HepG2 (cell line): ENCODE measurements at regions of chr22 and their contacts with region 1.

Region 1: DNA sequence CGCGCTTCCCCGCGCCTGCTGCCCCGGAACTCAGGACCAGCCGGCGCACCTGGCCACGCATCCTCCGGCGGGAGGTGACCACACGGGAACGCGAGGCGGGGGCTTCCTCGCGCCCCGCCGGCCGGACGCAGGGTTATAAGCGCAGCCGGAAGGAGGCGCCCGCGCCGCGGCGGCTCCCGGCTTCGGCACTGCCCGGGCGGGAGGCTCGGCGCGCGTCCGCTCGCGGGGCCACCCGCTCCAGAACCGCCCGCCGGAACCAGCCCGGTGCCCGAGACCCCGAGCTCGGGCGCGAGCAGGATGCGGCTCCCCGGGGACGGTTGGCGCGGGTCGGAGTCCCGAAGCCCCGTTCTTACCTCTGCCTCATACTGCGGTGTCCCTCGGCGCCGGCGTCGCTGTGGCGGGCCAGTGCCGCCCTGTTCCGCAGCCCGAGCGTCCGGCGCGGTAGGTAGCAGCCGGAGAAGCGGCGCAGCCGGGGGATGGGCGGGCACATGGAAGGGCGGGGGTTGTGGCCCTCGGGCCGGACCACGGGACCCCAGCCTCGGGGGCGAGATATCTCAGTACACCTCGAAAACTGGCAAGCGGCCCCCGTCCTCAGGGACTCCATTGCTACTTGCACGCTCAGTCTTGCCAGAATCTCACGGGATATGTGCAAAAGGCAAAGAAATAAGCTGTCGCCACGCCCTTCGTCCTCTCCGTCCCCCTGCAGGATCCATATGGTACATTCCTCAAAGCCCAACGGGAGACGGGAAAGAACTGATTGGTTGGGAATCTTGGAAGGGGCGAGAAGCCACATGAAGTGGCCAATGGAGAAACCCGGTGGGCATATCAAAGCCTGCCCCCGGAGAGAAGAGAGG is 23.1 kb downstream of the MICAL3 start:
- DNase-seq: peak; percentile 97
- ATAC-seq: peak; percentile 94
- H3K4me3 ChIP-seq: peak overlapping the region; percentile 84 to 92 (median 86)
- H3K27ac ChIP-seq: peak overlapping the region; percentile 98
- H3K4me1 ChIP-seq: peaks cover 18% of the 10 kb centered on the region
- H3K27me3 ChIP-seq: no peaks in the 10 kb centered on the region
- CTCF ChIP-seq: peak; percentile 62
- EP300 ChIP-seq: no peak
- POLR2A ChIP-seq: peak; percentile 72 to 88
- RAD21 ChIP-seq: peak; percentile 94

Region 2: DNA sequence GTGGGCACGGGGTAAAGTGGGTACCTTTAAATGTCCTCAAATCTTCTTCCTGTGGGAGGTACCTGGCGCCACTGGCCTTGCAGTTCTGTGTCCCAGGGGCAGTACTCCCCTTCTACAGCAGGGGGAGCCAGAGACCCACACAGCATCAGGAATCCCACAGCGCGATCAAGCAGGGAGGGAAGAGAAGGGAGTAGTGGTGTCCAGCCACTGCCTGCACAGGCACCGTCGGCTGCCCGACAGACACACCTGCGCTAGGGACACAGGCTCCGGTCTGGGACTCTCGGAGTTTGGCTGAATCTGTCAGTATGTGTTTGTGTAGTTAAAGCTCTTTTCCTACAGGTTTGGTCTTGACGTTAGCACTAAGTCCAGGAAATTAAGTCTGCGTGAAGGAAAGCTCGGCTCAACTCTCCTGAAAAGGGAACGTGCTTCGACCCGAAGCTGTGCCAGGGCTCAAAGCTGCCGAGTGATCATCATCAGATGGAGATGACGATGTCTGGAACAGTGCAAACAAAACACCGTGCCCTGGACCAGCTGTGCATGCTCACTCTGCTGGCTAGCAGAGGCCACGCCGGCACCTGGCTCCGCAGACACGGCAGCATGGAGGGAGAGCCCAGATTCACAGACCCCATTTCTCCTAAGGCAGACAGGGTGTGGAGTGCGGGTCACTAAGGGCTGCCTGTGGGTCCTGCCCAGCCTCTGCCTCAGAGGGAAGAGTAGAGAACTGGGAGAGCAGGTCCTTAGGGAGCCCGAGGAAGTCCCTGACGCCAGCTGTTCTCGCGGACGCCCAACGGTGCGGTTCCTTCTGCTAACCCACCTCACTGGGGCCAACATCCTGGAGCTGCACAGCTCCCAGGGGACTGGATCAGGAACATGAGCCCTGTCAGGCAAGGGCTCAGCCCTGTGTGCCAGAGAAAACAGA is 171.0 kb before region 1 on chr22:
- CTCF ChIA-PET with region 1: no interaction called
- POLR2A ChIA-PET with region 1: no interaction called
- in situ Hi-C with region 1: loop called (anchors 10 kb)
- intact Hi-C with region 1: no loop called
- DNase-seq: peak; percentile 63
- ATAC-seq: peak; percentile 93
- H3K4me3 ChIP-seq: no peak overlapping the region
- H3K27ac ChIP-seq: no peak overlapping the region
- H3K4me1 ChIP-seq: no peaks in the 10 kb centered on the region
- H3K27me3 ChIP-seq: no peaks in the 10 kb centered on the region
- CTCF ChIP-seq: peak; percentile 98
- EP300 ChIP-seq: no peak
- POLR2A ChIP-seq: no peak
- RAD21 ChIP-seq: peak; percentile 94

Region 3: DNA sequence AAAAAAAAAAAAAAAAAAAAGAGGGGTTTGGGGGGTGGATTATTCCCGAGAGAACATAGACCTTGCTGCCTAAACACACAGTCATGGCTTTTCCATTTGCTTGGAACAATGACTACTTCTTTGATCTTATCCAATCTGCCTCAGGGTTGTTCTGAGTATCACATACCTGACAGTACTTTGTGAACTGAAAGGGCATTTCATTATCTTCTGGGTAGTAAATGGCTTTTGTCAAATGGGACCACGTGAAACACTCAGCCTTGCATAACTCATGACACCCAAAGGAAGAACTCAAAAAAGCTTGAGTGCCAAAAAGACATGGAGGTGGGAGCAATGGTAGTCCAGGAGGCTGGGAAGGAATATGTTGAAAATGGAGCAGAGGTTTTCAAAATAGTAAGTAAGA is 103.8 kb before region 1 on chr22:
- CTCF ChIA-PET with region 1: no interaction called
- POLR2A ChIA-PET with region 1: no interaction called
- in situ Hi-C with region 1: no loop called
- intact Hi-C with region 1: loop called (anchors 5 kb)
- DNase-seq: peak; percentile 16
- ATAC-seq: no peak
- H3K4me3 ChIP-seq: no peak overlapping the region
- H3K27ac ChIP-seq: no peak overlapping the region
- H3K4me1 ChIP-seq: peaks cover 50% of the 10 kb centered on the region
- H3K27me3 ChIP-seq: no peaks in the 10 kb centered on the region
- CTCF ChIP-seq: no peak
- EP300 ChIP-seq: no peak
- POLR2A ChIP-seq: no peak
- RAD21 ChIP-seq: no peak

Region 4: GRCh38 chr22:17931400-17931825 is 69.9 kb before region 1 on chr22:
- CTCF ChIA-PET with region 1: no interaction called
- POLR2A ChIA-PET with region 1: no interaction called
- in situ Hi-C with region 1: no loop called
- intact Hi-C with region 1: loop called (anchors 5 kb)
- DNase-seq: no peak
- ATAC-seq: peak; percentile 32
- H3K4me3 ChIP-seq: no peak overlapping the region
- H3K27ac ChIP-seq: peak overlapping the region; percentile 65
- H3K4me1 ChIP-seq: peaks cover 27% of the 10 kb centered on the region
- H3K27me3 ChIP-seq: no peaks in the 10 kb centered on the region
- CTCF ChIP-seq: no peak
- EP300 ChIP-seq: no peak
- POLR2A ChIP-seq: no peak
- RAD21 ChIP-seq: no peak

Region 5: DNA sequence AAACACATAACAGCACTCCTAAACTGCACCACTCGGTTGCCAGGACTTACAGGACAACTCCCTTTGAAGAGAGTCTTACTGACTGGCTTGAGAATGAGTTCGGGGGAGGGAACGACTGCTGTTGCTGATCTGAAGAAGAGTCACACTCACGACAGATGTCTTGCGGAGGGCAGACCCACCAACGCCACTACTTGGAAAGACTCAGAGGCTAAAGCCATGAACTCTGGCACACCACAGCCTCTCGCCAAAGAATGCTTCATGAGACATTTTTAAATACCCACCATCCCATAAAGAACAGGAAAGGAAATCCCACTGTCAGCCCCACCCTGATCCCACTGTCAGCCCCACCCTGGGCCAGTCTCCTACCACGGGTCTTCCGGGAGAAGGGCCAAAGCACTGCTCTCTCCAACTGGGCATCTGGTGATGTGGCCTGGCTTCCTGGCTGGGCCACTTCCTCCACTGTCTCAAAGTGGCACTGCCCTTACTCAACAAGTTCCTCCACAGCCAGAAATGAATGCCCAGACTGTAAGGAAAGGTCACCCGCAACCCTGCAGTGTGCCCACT is 50.5 kb before region 1 on chr22:
- CTCF ChIA-PET with region 1: no interaction called
- POLR2A ChIA-PET with region 1: no interaction called
- in situ Hi-C with region 1: no loop called
- intact Hi-C with region 1: loop called (anchors 5 kb)
- DNase-seq: no peak
- ATAC-seq: no peak
- H3K4me3 ChIP-seq: no peak overlapping the region
- H3K27ac ChIP-seq: peak overlapping the region; percentile 16
- H3K4me1 ChIP-seq: peaks cover 64% of the 10 kb centered on the region
- H3K27me3 ChIP-seq: no peaks in the 10 kb centered on the region
- CTCF ChIP-seq: no peak
- EP300 ChIP-seq: no peak
- POLR2A ChIP-seq: no peak
- RAD21 ChIP-seq: no peak

Region 6: GRCh38 chr22:17974703-17975372 is 26.4 kb before region 1 on chr22:
- CTCF ChIA-PET with region 1: no interaction called
- POLR2A ChIA-PET with region 1: interaction called, 3 read pairs
- in situ Hi-C with region 1: no loop called
- intact Hi-C with region 1: loop called (anchors 1 kb)
- DNase-seq: no peak
- ATAC-seq: no peak
- H3K4me3 ChIP-seq: no peak overlapping the region
- H3K27ac ChIP-seq: no peak overlapping the region
- H3K4me1 ChIP-seq: peaks cover 62% of the 10 kb centered on the region
- H3K27me3 ChIP-seq: no peaks in the 10 kb centered on the region
- CTCF ChIP-seq: no peak
- EP300 ChIP-seq: no peak
- POLR2A ChIP-seq: no peak
- RAD21 ChIP-seq: no peak

Region 7: DNA sequence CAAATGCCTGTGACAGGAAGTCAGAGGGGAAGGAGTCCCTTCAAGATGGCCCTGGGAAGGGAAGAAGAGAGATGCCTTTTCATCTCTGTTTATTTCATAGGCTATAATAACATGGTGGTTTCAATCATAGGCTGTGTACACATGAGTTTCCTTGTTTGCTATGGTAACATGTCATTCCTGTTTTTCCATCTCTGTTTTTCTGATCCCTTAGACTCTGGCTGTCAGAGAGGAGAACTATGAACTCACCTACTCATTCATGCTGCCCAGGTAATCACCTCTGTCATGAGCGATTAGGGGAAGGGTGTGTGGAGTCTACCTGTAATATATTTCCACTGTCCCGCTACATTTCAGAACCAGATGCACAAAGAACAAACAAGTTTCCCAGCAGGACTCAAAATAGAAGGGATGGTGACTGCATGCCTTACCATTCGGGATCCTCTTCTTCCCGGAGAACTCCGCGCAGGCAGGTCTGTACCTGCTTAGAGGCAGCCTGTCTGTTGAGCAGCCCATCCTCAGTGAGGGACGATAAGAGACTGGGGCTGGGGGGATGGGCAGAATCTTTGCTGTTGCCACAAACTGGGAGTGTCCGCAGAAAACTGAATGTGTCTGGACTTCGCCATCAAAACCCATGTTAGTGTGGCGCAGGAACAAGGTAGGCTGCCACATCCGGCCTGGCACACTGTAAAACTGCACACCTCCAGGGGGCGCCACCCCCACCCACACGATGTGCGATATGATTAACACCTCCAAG is 69.5 kb after region 1 on chr22:
- CTCF ChIA-PET with region 1: interaction called, 10 read pairs
- POLR2A ChIA-PET with region 1: interaction called, 15 read pairs
- in situ Hi-C with region 1: loop called (anchors 5 kb)
- intact Hi-C with region 1: no loop called
- DNase-seq: peak; percentile 25
- ATAC-seq: no peak; the same call in 2 of the 3 replicates
- H3K4me3 ChIP-seq: no peak overlapping the region
- H3K27ac ChIP-seq: no peak overlapping the region
- H3K4me1 ChIP-seq: peaks cover 68% of the 10 kb centered on the region
- H3K27me3 ChIP-seq: no peaks in the 10 kb centered on the region
- CTCF ChIP-seq: peak; percentile 35; the same call in 1 of the 2 replicates
- EP300 ChIP-seq: no peak
- POLR2A ChIP-seq: no peak
- RAD21 ChIP-seq: no peak